Endothelial cell of umbilical vein (primary cell): ENCODE measurements at regions of chr17 and their contacts with region 1.

Region 1: GRCh38 chr17:48024937-48025906 is 12.4 kb downstream of the COPZ2 start:
- DNase-seq: peak; percentile 97
- H3K4me3 ChIP-seq: peak overlapping the region; percentile 5 to 55 (median 39)
- H3K27ac ChIP-seq: no peak overlapping the region
- H3K4me1 ChIP-seq: peaks cover 26% of the 10 kb centered on the region
- H3K27me3 ChIP-seq: no peaks in the 10 kb centered on the region
- CTCF ChIP-seq: peak; percentile 73 to 90
- POLR2A ChIP-seq: no peak

Region 2: GRCh38 chr17:47949136-47949759 is 76.0 kb before region 1 on chr17:
- CTCF ChIA-PET with region 1: interaction called, 13 read pairs
- POLR2A ChIA-PET with region 1: no interaction called
- dilution Hi-C with region 1: no loop called
- intact Hi-C with region 1: no loop called
- DNase-seq: peak; percentile 77
- H3K4me3 ChIP-seq: no peak overlapping the region
- H3K27ac ChIP-seq: no peak overlapping the region
- H3K4me1 ChIP-seq: peaks cover 4% of the 10 kb centered on the region
- H3K27me3 ChIP-seq: no peaks in the 10 kb centered on the region
- CTCF ChIP-seq: peak; percentile 90 to 95
- POLR2A ChIP-seq: no peak

Region 3: GRCh38 chr17:48047741-48048383 is 22.6 kb after region 1 on chr17 and contains the start of gene NFE2L1:
- CTCF ChIA-PET with region 1: interaction called, 64 read pairs
- POLR2A ChIA-PET with region 1: interaction called, 6 read pairs
- dilution Hi-C with region 1: no loop called
- intact Hi-C with region 1: loop called (anchors 1 kb)
- DNase-seq: peak; percentile 100
- H3K4me3 ChIP-seq: peak within 1 kb of the TSS; percentile 64 to 91 (median 71)
- H3K27ac ChIP-seq: peak within 1 kb of the TSS; percentile 72
- H3K4me1 ChIP-seq: peaks cover 40% of the 10 kb centered on the region
- H3K27me3 ChIP-seq: no peaks in the 10 kb centered on the region
- CTCF ChIP-seq: no peak
- POLR2A ChIP-seq: peak; percentile 71
- total RNA-seq, gene NFE2L1: 204 and 236 TPM in 2 replicates

Region 4: GRCh38 chr17:48068491-48068961 is 43.3 kb after region 1 on chr17:
- CTCF ChIA-PET with region 1: interaction called, 210 read pairs
- POLR2A ChIA-PET with region 1: no interaction called
- dilution Hi-C with region 1: no loop called
- intact Hi-C with region 1: no loop called
- DNase-seq: no peak
- H3K4me3 ChIP-seq: no peak overlapping the region
- H3K27ac ChIP-seq: no peak overlapping the region
- H3K4me1 ChIP-seq: peaks cover 14% of the 10 kb centered on the region
- H3K27me3 ChIP-seq: no peaks in the 10 kb centered on the region
- CTCF ChIP-seq: peak; percentile 34 to 37
- POLR2A ChIP-seq: no peak

Region 5: DNA sequence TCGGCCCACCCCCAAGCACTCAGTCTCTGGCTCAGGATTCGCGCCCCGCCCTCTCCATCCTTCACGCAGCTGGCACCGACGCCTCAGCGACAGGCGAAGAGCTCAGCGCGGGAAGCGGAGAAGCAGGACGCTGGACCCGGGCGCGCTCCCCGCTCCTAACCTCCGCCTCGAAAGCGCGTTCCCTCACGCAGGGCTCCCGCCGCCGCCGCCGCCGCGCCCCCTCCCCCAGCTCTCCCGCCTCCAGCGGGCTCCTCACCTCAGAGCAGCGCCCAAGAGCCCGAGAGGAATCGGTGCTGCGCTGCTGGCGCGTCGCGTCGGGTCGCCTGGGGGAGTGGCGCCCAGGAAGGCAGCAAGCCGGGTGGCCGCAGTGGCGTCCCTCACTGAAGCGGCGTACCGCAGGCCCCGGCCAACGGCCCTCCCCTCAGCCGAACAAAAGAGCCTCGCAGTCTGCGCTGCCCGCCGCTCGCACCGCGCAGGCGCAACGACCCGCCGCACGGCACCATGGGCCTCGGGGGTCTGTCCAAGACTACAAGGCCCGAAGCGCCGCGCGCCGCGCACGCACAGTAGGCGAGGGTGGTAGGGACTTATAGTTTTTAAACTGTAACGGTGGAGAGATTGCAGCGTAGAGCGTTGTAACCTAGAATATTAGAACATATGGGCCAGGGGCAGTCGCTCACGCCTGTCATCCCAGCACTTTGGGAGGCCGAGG is 75.9 kb after region 1 on chr17 and contains the start of gene CBX1:
- CTCF ChIA-PET with region 1: interaction called, 44 read pairs
- POLR2A ChIA-PET with region 1: interaction called, 3 read pairs
- dilution Hi-C with region 1: no loop called
- intact Hi-C with region 1: loop called (anchors 2 kb)
- DNase-seq: peak; percentile 96
- H3K4me3 ChIP-seq: peak within 1 kb of the TSS; percentile 60 to 91 (median 82)
- H3K27ac ChIP-seq: peak within 1 kb of the TSS; percentile 58
- H3K4me1 ChIP-seq: peaks cover 8% of the 10 kb centered on the region
- H3K27me3 ChIP-seq: no peaks in the 10 kb centered on the region
- CTCF ChIP-seq: no peak
- POLR2A ChIP-seq: peak; percentile 50
- total RNA-seq, gene CBX1: 95.2 and 102 TPM in 2 replicates

Region 6: DNA sequence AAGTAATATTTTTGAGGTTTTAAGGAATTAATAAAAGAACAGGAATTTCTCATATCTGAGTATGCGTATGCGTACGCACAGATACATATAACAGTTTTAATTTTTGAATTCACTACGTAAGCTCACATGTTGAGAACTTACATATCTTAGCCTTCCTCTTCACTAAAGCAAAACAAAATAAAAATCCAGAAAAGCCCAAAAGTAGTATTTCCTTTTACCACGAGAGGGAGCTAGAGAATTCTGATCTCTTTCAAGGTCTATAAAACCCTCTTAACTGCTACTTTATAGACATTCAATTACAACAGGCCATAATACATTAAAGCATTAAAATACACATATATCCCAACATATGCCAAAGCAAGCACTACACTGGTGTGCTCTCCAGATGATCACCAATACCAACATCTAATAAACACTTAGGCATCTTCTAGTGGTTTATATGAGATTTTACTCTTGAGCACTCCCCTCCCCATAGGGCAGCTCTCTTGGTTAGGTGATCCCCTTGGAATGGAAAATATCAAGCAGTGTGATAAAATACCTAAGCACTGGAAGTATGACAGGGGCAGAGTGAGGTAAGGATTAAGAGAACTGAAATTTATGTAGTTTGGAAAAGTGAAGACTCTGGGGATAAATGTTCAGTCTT is 310.8 kb after region 1 on chr17:
- CTCF ChIA-PET with region 1: interaction called, 5 read pairs
- POLR2A ChIA-PET with region 1: no interaction called
- dilution Hi-C with region 1: no loop called
- intact Hi-C with region 1: loop called (anchors 10 kb)
- DNase-seq: peak; percentile 87
- H3K4me3 ChIP-seq: no peak overlapping the region
- H3K27ac ChIP-seq: no peak overlapping the region
- H3K4me1 ChIP-seq: no peaks in the 10 kb centered on the region
- H3K27me3 ChIP-seq: peaks cover 0 to 3% of the 10 kb centered on the region in 2 experiments
- CTCF ChIP-seq: peak; percentile 47 to 55
- POLR2A ChIP-seq: no peak